ENCODE measurements at regions of chr17 and their contacts with region 1.

Region 1: DNA sequence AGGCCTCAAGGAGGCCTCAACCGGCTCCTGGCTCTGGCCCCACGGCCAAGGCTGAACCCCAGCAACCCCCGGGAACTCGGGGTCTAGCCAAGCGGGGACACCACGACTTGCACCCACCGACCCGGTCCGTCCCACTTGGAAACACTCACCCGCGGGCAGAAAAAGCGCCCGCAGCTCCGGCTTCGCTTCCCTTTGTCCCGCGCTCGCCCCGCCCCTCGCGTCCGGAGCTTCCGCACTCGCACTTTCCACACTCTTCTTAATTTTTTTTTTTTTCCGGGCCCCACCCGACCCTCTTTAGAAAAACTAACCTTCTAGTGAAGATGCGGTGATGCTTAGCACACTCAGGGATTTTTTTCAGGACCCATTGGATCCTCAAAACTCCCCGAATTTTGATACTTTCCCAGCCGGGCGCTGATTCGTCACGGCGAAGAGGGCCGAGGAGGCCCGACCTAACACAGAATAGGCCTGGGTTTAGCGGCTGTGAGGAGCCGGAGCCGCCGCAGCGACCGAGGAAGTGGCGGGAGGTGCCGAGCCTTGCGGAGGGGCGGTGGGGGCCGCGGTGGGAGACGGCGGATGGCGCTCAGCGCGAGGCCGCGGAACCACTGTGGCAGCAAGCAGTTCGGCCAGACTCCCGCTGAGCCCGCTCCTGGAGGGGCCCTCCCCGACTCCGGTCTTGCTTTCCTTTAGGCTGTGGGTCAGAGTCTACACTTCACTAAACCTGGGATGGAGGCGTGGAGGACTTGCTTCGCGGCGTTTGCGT is at the start of gene SMARCE1:
- DNase-seq: peak in 1 of 2 donors; percentile 80
- H3K4me3 ChIP-seq: peak within 1 kb of the TSS; percentile 79 to 96
- H3K27ac ChIP-seq: peak within 1 kb of the TSS; percentile 98 to 99
- H3K4me1 ChIP-seq: peaks cover 15 to 31% of the 10 kb centered on the region in 2 donors
- H3K27me3 ChIP-seq: no peaks in the 10 kb centered on the region
- CTCF ChIP-seq: no peak
- total RNA-seq, gene SMARCE1: 147 TPM

Region 2: GRCh38 chr17:40818733-40819527 is 171.1 kb after region 1 on chr17:
- intact Hi-C with region 1: loop called (anchors 10 kb)
- DNase-seq: peak; percentile 9 to 86
- H3K4me3 ChIP-seq: peak overlapping the region; percentile 79 to 92
- H3K27ac ChIP-seq: peak overlapping the region; percentile 81 to 91
- H3K4me1 ChIP-seq: peaks cover 0 to 8% of the 10 kb centered on the region in 2 donors
- H3K27me3 ChIP-seq: no peaks in the 10 kb centered on the region
- CTCF ChIP-seq: no peak

Region 3: GRCh38 chr17:41688699-41689496 is 1041.1 kb after region 1 on chr17 and contains the start of gene EIF1:
- intact Hi-C with region 1: loop called (anchors 5 kb)
- DNase-seq: peak; percentile 98 to 100
- H3K4me3 ChIP-seq: peak within 1 kb of the TSS; percentile 74 to 93
- H3K27ac ChIP-seq: peak within 1 kb of the TSS; percentile 100
- H3K4me1 ChIP-seq: peaks cover 12 to 20% of the 10 kb centered on the region in 2 donors
- H3K27me3 ChIP-seq: no peaks in the 10 kb centered on the region
- CTCF ChIP-seq: peak in 1 of 3 experiments; percentile 19
- total RNA-seq, gene EIF1: 102 TPM